H1 (cell line): ENCODE measurements at regions of chr2 and their contacts with region 1.

Region 1: GRCh38 chr2:172465417-172466334 is 38.3 kb downstream of the ITGA6 start:
- DNase-seq: peak in 1 of 2 experiments; percentile 73
- H3K4me3 ChIP-seq: no peak overlapping the region
- H3K27ac ChIP-seq: no peak overlapping the region
- H3K4me1 ChIP-seq: peaks cover 10 to 19% (median 11%) of the 10 kb centered on the region in 4 experiments; a peak in 6 of 7 replicates
- H3K27me3 ChIP-seq: no peaks in the 10 kb centered on the region
- CTCF ChIP-seq: peak; percentile 30 to 86 (median 67)
- EP300 ChIP-seq: no peak
- POLR2A ChIP-seq: no peak
- RAD21 ChIP-seq: peak; percentile 93 to 94

Region 2: GRCh38 chr2:172179045-172179701 is 286.5 kb before region 1 on chr2:
- CTCF ChIA-PET with region 1: interaction called, 206 read pairs
- POLR2A ChIA-PET with region 1: no interaction called
- DNase-seq: no peak
- H3K4me3 ChIP-seq: no peak overlapping the region
- H3K27ac ChIP-seq: no peak overlapping the region
- H3K4me1 ChIP-seq: peaks cover 0 to 5% (median 2%) of the 10 kb centered on the region in 4 experiments; a peak in 3 of 7 replicates
- H3K27me3 ChIP-seq: peaks cover 0 to 10% (median 7%) of the 10 kb centered on the region in 4 experiments; a peak in 4 of 7 replicates
- CTCF ChIP-seq: no peak
- EP300 ChIP-seq: no peak
- POLR2A ChIP-seq: no peak
- RAD21 ChIP-seq: no peak

Region 3: GRCh38 chr2:172226244-172227061 is 239.2 kb before region 1 on chr2:
- CTCF ChIA-PET with region 1: interaction called, 24 read pairs
- POLR2A ChIA-PET with region 1: interaction called, 4 read pairs
- DNase-seq: no peak
- H3K4me3 ChIP-seq: no peak overlapping the region
- H3K27ac ChIP-seq: no peak overlapping the region
- H3K4me1 ChIP-seq: 0 out of 7 replicates have a peak, but pooled peaks cover 0 to 4% (median 0%) of the 10 kb centered on the region in 4 experiments
- H3K27me3 ChIP-seq: no peaks in the 10 kb centered on the region
- CTCF ChIP-seq: no peak
- EP300 ChIP-seq: no peak
- POLR2A ChIP-seq: no peak
- RAD21 ChIP-seq: no peak; a peak in 1 of 4 replicates

Region 4: GRCh38 chr2:172313715-172314341 is 151.8 kb before region 1 on chr2:
- CTCF ChIA-PET with region 1: interaction called, 10 read pairs
- POLR2A ChIA-PET with region 1: no interaction called
- DNase-seq: no peak
- H3K4me3 ChIP-seq: no peak overlapping the region
- H3K27ac ChIP-seq: no peak overlapping the region
- H3K4me1 ChIP-seq: no peaks in the 10 kb centered on the region
- H3K27me3 ChIP-seq: no peaks in the 10 kb centered on the region; a peak in 1 of 7 replicates
- CTCF ChIP-seq: no peak
- EP300 ChIP-seq: no peak
- POLR2A ChIP-seq: no peak
- RAD21 ChIP-seq: no peak

Region 5: GRCh38 chr2:172397148-172397834 is 68.4 kb before region 1 on chr2:
- CTCF ChIA-PET with region 1: interaction called, 16 read pairs
- POLR2A ChIA-PET with region 1: no interaction called
- DNase-seq: no peak
- H3K4me3 ChIP-seq: no peak overlapping the region
- H3K27ac ChIP-seq: no peak overlapping the region
- H3K4me1 ChIP-seq: no peaks in the 10 kb centered on the region
- H3K27me3 ChIP-seq: no peaks in the 10 kb centered on the region
- CTCF ChIP-seq: no peak
- EP300 ChIP-seq: no peak
- POLR2A ChIP-seq: no peak
- RAD21 ChIP-seq: no peak

Region 6: GRCh38 chr2:172484253-172484652 is 18.6 kb after region 1 on chr2:
- CTCF ChIA-PET with region 1: interaction called, 19 read pairs
- POLR2A ChIA-PET with region 1: interaction called, 3 read pairs
- DNase-seq: no peak
- H3K4me3 ChIP-seq: no peak overlapping the region
- H3K27ac ChIP-seq: no peak overlapping the region
- H3K4me1 ChIP-seq: 0 out of 7 replicates have a peak, but pooled peaks cover 0 to 1% (median 0%) of the 10 kb centered on the region in 4 experiments
- H3K27me3 ChIP-seq: no peaks in the 10 kb centered on the region
- CTCF ChIP-seq: no peak
- EP300 ChIP-seq: no peak
- POLR2A ChIP-seq: no peak
- RAD21 ChIP-seq: peak; percentile 48 to 49

Region 7: DNA sequence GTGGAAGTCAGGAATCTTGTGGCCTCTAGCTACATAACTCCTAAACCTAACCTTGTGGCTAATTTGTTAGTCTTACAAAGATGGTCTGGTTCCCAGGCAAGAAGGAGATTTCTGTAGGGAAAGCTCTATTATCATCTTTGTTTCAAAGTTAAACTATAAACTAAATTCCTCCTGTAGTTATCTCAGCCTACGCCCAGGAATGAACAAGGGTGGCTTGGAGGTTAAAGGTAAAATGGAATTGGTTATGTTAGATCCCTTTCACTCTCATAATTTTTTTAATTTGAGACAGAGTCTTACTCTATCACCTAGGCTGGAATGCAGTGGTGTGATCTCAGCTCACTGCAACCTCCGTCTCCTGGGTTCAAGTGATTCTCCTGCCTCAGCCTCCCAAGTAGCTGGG is 65.6 kb after region 1 on chr2:
- CTCF ChIA-PET with region 1: no interaction called
- POLR2A ChIA-PET with region 1: no interaction called
- DNase-seq: no peak
- H3K4me3 ChIP-seq: no peak overlapping the region
- H3K27ac ChIP-seq: no peak overlapping the region; the same call in 1 of the 2 replicates
- H3K4me1 ChIP-seq: peaks cover 0 to 14% (median 11%) of the 10 kb centered on the region in 4 experiments; a peak in 5 of 7 replicates
- H3K27me3 ChIP-seq: no peaks in the 10 kb centered on the region
- CTCF ChIP-seq: no peak
- EP300 ChIP-seq: no peak
- POLR2A ChIP-seq: no peak
- RAD21 ChIP-seq: no peak